K562 (cell line): ENCODE measurements at regions of chr9 and their contacts with region 1.

Region 1: DNA sequence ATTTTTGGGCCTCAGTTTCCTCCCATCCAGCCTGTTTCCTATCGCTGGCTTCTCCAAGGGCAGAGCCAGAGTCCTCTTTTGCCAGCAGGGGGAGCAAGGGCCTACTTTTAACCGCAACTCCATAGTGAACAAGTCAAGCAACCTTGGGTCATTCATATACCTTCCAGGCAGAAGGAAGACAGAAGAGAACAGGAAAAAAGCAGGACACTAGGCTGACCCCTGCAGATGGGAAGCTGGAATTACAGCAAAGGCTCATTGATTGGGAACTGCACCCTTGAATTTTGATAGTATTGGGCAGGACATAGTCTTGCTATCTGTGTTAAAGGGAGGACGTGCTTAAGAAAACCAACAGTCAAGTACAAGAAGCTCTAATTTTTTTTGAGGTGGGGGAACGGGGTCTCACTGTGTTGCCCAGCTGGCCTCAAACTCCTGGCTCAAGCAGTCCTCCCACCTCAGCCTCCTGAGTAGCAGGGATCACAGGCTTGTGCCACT is 30.1 kb downstream of the QRFP start:
- DNase-seq: peak in 2 of 4 experiments; percentile 97 to 100
- ATAC-seq: peak; percentile 94
- H3K4me3 ChIP-seq: no peak overlapping the region
- H3K27ac ChIP-seq: no peak overlapping the region
- H3K4me1 ChIP-seq: peaks cover 0 to 4% of the 10 kb centered on the region in 2 experiments; a peak in 3 of 5 replicates
- H3K27me3 ChIP-seq: no peaks in the 10 kb centered on the region
- CTCF ChIP-seq: no peak
- EP300 ChIP-seq: no peak
- POLR2A ChIP-seq: no peak
- RAD21 ChIP-seq: no peak

Region 2: GRCh38 chr9:130320723-130321481 is 545.6 kb before region 1 on chr9:
- CTCF ChIA-PET with region 1: no interaction called
- POLR2A ChIA-PET with region 1: no interaction called
- in situ Hi-C with region 1: no loop called
- intact Hi-C with region 1: no loop called
- DNase-seq: peak; percentile 60 to 86 (median 78)
- ATAC-seq: peak; percentile 95
- H3K4me3 ChIP-seq: no peak overlapping the region
- H3K27ac ChIP-seq: no peak overlapping the region
- H3K4me1 ChIP-seq: peaks cover 10 to 32% of the 10 kb centered on the region in 2 experiments; a peak in 3 of 5 replicates
- H3K27me3 ChIP-seq: peaks cover 22 to 71% of the 10 kb centered on the region in 2 experiments
- CTCF ChIP-seq: peak; percentile 40 to 63 (median 60)
- EP300 ChIP-seq: no peak
- POLR2A ChIP-seq: no peak
- RAD21 ChIP-seq: no peak

Region 3: GRCh38 chr9:130542457-130543228 is 323.9 kb before region 1 on chr9:
- CTCF ChIA-PET with region 1: no interaction called
- POLR2A ChIA-PET with region 1: no interaction called
- in situ Hi-C with region 1: no loop called
- intact Hi-C with region 1: no loop called
- DNase-seq: peak; percentile 35 to 72 (median 57)
- ATAC-seq: peak; percentile 55
- H3K4me3 ChIP-seq: no peak overlapping the region
- H3K27ac ChIP-seq: no peak overlapping the region
- H3K4me1 ChIP-seq: peaks cover 17 to 40% of the 10 kb centered on the region in 2 experiments
- H3K27me3 ChIP-seq: no peaks in the 10 kb centered on the region
- CTCF ChIP-seq: no peak
- EP300 ChIP-seq: no peak
- POLR2A ChIP-seq: no peak
- RAD21 ChIP-seq: no peak

Region 4: DNA sequence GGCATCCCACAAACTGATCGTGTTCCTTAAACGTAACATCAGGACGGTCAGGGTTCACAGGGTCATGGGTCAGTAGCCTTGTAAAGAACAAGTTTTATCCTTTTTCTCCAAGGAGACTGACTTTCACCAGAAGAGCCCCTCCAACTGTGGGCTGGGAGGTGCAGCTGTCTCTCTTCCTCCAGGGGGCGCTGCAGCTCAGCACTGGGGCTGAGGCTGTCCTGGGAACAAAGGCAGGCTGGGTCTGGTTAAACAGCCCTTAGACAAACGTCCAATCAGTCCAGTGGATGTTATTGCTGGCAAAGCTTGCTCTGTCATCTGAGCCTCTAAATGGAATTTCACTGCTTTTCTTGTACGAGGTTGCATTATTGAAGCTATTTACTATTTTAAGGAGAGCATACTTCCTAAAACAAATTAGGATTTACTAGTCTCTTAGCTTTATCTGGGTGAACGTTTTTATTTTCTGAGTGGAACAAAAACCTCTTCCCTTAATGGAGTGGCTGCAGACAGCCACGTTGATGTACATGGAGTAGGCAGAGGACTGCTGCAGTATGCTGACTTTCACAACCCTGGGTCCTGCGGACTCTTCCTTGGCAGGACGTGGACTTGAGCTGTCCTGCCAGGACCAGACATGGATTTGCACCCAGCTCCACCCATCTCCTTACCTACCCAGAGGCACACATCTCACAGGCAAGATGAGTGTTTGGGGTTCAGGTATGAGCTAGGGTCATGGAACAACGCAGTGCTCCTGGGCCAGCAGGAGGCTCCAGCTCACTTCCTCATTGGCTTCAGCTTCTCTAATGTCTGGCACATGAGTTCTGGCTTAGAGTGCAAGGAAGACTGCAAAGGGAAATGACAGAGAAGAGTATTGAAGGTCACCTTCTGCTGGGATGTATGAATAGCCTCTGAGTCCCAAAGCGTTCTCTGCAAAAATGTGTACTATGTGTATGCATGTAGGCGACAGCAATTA is 165.2 kb before region 1 on chr9:
- CTCF ChIA-PET with region 1: interaction called, 82 read pairs
- POLR2A ChIA-PET with region 1: interaction called, 7 read pairs
- in situ Hi-C with region 1: loop called (anchors 5 kb)
- intact Hi-C with region 1: no loop called
- DNase-seq: peak; percentile 65 to 83 (median 72)
- ATAC-seq: peak; percentile 97
- H3K4me3 ChIP-seq: no peak overlapping the region
- H3K27ac ChIP-seq: no peak overlapping the region
- H3K4me1 ChIP-seq: no peaks in the 10 kb centered on the region; a peak in 1 of 5 replicates
- H3K27me3 ChIP-seq: no peaks in the 10 kb centered on the region
- CTCF ChIP-seq: peak; percentile 88 to 97 (median 89)
- EP300 ChIP-seq: no peak
- POLR2A ChIP-seq: no peak
- RAD21 ChIP-seq: peak; percentile 52 to 74

Region 5: GRCh38 chr9:130770679-130771442 is 95.7 kb before region 1 on chr9:
- CTCF ChIA-PET with region 1: interaction called, 636 read pairs
- POLR2A ChIA-PET with region 1: interaction called, 16 read pairs
- in situ Hi-C with region 1: loop called (anchors 5 kb)
- intact Hi-C with region 1: loop called (anchors 1 kb)
- DNase-seq: peak; percentile 91 to 98 (median 95)
- ATAC-seq: peak; percentile 89
- H3K4me3 ChIP-seq: no peak overlapping the region
- H3K27ac ChIP-seq: no peak overlapping the region
- H3K4me1 ChIP-seq: peaks cover 6 to 8% of the 10 kb centered on the region in 2 experiments; a peak in 4 of 5 replicates
- H3K27me3 ChIP-seq: no peaks in the 10 kb centered on the region
- CTCF ChIP-seq: no peak
- EP300 ChIP-seq: no peak
- POLR2A ChIP-seq: no peak
- RAD21 ChIP-seq: no peak

Region 6: DNA sequence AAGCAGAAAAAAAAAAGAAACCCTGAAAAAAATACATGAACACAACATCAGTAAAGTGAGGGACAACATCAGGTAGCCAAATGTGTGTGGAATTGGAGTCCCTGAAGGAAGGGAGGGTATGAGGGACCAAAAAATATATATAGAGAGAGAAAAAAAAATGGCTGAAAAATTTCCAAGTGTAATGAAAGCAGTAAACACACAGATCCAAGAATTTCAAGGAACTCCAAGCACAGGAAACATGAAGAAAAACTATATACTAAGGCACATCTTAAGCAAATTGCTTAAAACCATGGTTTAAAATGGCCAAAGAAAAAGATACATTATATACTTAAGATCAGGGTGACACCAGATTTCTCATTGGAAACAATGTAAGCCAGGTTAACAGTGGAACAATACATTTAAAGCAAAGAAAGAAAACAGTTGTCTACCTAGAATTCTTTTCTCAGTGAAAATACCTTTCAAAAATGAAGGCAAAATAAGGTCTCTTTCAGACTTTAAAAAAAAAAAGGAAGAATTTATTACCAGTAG is 55.8 kb before region 1 on chr9:
- CTCF ChIA-PET with region 1: no interaction called
- POLR2A ChIA-PET with region 1: no interaction called
- in situ Hi-C with region 1: no loop called
- intact Hi-C with region 1: no loop called
- DNase-seq: peak in 1 of 4 experiments; percentile 46
- ATAC-seq: no peak
- H3K4me3 ChIP-seq: no peak overlapping the region
- H3K27ac ChIP-seq: no peak overlapping the region
- H3K4me1 ChIP-seq: no peaks in the 10 kb centered on the region
- H3K27me3 ChIP-seq: no peaks in the 10 kb centered on the region
- CTCF ChIP-seq: no peak
- EP300 ChIP-seq: no peak
- POLR2A ChIP-seq: no peak
- RAD21 ChIP-seq: no peak

Region 7: GRCh38 chr9:130847327-130848217 is 18.9 kb before region 1 on chr9:
- CTCF ChIA-PET with region 1: interaction called, 8 read pairs
- POLR2A ChIA-PET with region 1: interaction called, 147 read pairs
- in situ Hi-C with region 1: no loop called
- intact Hi-C with region 1: no loop called
- DNase-seq: peak in 1 of 4 experiments; percentile 66
- ATAC-seq: no peak
- H3K4me3 ChIP-seq: no peak overlapping the region
- H3K27ac ChIP-seq: no peak overlapping the region
- H3K4me1 ChIP-seq: peaks cover 26 to 29% of the 10 kb centered on the region in 2 experiments
- H3K27me3 ChIP-seq: no peaks in the 10 kb centered on the region
- CTCF ChIP-seq: no peak
- EP300 ChIP-seq: no peak
- POLR2A ChIP-seq: no peak
- RAD21 ChIP-seq: no peak

Region 8: DNA sequence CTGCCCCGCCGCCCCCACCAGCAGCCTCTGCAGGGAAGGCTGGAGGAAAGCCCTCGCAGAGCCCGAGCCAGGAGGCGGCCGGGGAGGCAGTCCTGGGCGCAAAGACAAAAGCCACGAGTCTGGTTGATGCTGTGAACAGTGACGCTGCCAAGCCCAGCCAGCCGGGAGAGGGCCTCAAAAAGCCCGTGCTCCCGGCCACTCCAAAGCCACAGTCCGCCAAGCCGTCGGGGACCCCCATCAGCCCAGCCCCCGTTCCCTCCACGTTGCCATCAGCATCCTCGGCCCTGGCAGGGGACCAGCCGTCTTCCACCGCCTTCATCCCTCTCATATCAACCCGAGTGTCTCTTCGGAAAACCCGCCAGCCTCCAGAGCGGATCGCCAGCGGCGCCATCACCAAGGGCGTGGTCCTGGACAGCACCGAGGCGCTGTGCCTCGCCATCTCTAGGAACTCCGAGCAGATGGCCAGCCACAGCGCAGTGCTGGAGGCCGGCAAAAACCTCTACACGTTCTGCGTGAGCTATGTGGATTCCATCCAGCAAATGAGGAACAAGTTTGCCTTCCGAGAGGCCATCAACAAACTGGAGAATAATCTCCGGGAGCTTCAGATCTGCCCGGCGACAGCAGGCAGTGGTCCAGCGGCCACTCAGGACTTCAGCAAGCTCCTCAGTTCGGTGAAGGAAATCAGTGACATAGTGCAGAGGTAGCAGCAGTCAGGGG is 18.6 kb after region 1 on chr9:
- CTCF ChIA-PET with region 1: interaction called, 3 read pairs
- POLR2A ChIA-PET with region 1: interaction called, 220 read pairs
- in situ Hi-C with region 1: no loop called
- intact Hi-C with region 1: no loop called
- DNase-seq: peak in 2 of 4 experiments; percentile 53 to 54
- ATAC-seq: no peak; the same call in 2 of the 3 replicates
- H3K4me3 ChIP-seq: no peak overlapping the region
- H3K27ac ChIP-seq: no peak overlapping the region
- H3K4me1 ChIP-seq: peaks cover 0 to 40% of the 10 kb centered on the region in 2 experiments; a peak in 1 of 5 replicates
- H3K27me3 ChIP-seq: no peaks in the 10 kb centered on the region
- CTCF ChIP-seq: no peak
- EP300 ChIP-seq: no peak
- POLR2A ChIP-seq: no peak
- RAD21 ChIP-seq: no peak

Region 9: DNA sequence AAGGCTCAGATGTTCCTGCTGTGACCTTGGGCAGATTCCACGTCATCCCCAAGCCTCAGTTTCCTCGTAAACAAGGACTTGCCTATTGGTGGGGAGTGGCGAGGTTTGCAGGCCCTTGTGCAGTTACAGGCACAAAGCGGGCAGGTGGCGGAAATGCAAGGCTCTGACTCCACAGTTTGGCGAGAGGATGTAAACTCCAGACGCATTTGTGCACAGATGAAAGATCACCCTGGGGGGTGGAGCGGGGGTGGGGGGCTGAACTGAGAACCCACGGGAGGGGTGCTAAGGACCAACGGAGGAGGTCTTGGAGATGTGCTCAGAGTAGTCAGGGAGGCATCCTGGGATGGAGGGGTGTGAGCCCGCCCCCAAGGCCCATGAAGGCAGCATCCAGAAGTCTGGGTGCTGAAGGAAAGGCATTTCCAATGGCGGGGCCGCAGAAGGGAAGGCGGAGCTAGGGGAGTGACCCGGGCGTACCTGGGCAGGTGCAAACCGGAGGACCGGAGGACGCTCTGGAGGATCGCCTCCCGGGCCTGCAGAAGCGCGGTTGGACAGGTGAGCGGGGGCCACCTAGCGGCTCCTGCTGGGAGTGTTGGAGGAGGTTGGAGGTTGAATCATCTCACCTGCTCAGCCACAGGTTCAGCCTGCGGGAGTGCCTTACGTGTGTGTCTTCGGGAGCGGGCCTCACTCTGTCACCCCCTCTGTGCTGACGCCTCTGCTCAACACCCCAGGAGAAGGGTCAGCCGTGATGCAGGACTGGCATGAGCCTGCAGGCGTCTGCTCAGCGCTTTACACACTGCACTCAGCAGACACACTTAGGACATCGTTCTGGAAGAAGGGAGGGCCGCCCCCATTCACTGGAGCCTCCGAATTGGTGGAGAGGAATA is 74.4 kb after region 1 on chr9:
- CTCF ChIA-PET with region 1: interaction called, 135 read pairs
- POLR2A ChIA-PET with region 1: interaction called, 12 read pairs
- in situ Hi-C with region 1: no loop called
- intact Hi-C with region 1: loop called (anchors 1 kb)
- DNase-seq: peak; percentile 63 to 100 (median 96)
- ATAC-seq: peak; percentile 89
- H3K4me3 ChIP-seq: no peak overlapping the region
- H3K27ac ChIP-seq: no peak overlapping the region
- H3K4me1 ChIP-seq: peaks cover 0 to 42% of the 10 kb centered on the region in 2 experiments; a peak in 3 of 5 replicates
- H3K27me3 ChIP-seq: peaks cover 55 to 84% of the 10 kb centered on the region in 2 experiments
- CTCF ChIP-seq: no peak
- EP300 ChIP-seq: no peak
- POLR2A ChIP-seq: no peak
- RAD21 ChIP-seq: no peak

Region 10: GRCh38 chr9:131046581-131047202 is 180.2 kb after region 1 on chr9:
- CTCF ChIA-PET with region 1: interaction called, 201 read pairs
- POLR2A ChIA-PET with region 1: interaction called, 11 read pairs
- in situ Hi-C with region 1: no loop called
- intact Hi-C with region 1: loop called (anchors 1 kb)
- DNase-seq: peak in 3 of 4 experiments; percentile 99 to 100 (median 99)
- ATAC-seq: peak; percentile 93
- H3K4me3 ChIP-seq: no peak overlapping the region
- H3K27ac ChIP-seq: no peak overlapping the region
- H3K4me1 ChIP-seq: peaks cover 0 to 23% of the 10 kb centered on the region in 2 experiments; a peak in 3 of 5 replicates
- H3K27me3 ChIP-seq: peaks cover 55 to 73% of the 10 kb centered on the region in 2 experiments
- CTCF ChIP-seq: no peak
- EP300 ChIP-seq: no peak
- POLR2A ChIP-seq: no peak
- RAD21 ChIP-seq: no peak

Region 11: DNA sequence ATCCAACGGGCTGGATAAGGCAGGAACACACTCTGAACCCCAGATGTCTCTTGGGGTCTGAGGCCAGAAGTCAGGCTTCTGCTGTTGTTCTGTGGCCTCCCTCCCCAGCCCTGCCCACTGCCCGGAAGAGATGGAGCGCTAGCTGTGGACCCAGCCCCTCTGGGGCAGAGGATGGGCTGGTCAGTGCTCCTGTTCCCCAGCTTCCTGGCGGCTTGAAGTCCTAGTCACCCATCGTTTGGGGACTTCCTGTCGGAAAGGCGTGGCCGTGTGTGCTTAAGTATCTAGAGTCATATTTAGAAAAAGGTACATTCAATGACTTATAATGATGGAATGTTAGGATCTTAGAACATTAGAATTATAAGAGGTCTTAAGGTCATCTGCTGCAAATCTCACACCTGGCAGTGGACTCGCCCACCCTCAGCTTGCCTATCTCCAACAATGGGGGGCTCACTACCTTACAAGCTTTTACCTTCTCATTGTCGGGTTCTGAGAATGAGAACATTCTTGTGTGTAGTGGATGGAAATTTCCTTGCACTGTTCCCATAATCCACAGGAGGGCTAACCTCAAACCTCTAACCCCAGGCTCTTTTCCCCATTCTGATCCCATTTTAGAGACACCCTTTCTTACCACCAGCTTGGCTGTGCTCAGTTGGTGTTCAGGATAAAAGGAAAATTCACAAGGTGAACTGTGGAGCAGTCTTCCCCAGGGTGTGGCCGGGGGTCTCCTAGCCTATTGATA is 216.4 kb after region 1 on chr9:
- CTCF ChIA-PET with region 1: no interaction called
- POLR2A ChIA-PET with region 1: no interaction called
- in situ Hi-C with region 1: no loop called
- intact Hi-C with region 1: no loop called
- DNase-seq: peak in 2 of 4 experiments; percentile 64 to 69
- ATAC-seq: peak; percentile 3
- H3K4me3 ChIP-seq: no peak overlapping the region
- H3K27ac ChIP-seq: no peak overlapping the region
- H3K4me1 ChIP-seq: peaks cover 0 to 18% of the 10 kb centered on the region in 2 experiments; a peak in 2 of 5 replicates
- H3K27me3 ChIP-seq: peaks cover 86 to 96% of the 10 kb centered on the region in 2 experiments
- CTCF ChIP-seq: no peak
- EP300 ChIP-seq: no peak
- POLR2A ChIP-seq: no peak
- RAD21 ChIP-seq: no peak